ENCODE measurements at regions of chr14 and their contacts with region 1.

Region 1: GRCh38 chr14:63437953-63438757 is 105.0 kb downstream of the PPP2R5E start:
- DNase-seq: peak in 1 of 2 donors; percentile 86
- H3K4me3 ChIP-seq: peak overlapping the region; percentile 20 to 27
- H3K27ac ChIP-seq: peak overlapping the region; percentile 51 to 67
- H3K4me1 ChIP-seq: peaks cover 9 to 41% of the 10 kb centered on the region in 2 donors
- H3K27me3 ChIP-seq: no peaks in the 10 kb centered on the region
- CTCF ChIP-seq: peak in 1 of 3 experiments; percentile 29

Region 2: DNA sequence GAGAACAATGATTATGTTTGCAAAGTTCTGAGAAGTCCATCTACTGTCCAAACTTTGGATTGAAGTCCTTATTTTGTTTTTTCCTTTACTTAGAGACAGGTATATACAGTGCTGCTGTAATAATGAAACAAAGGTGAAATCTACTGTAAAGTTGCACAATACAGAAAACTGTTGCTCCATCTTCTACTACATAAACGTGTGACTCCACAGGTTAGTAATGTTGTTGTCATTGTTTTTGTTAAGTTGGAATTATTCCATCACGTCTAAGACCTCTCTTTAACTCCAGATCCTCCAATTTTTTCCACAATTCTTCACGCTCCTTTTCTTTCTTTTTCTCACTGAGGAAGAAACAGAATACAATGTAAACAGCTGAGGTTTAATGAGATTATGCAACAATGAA is 62.4 kb before region 1 on chr14:
- intact Hi-C with region 1: no loop called
- DNase-seq: no peak
- H3K4me3 ChIP-seq: no peak overlapping the region
- H3K27ac ChIP-seq: no peak overlapping the region
- H3K4me1 ChIP-seq: no peaks in the 10 kb centered on the region
- H3K27me3 ChIP-seq: no peaks in the 10 kb centered on the region
- CTCF ChIP-seq: no peak

Region 3: DNA sequence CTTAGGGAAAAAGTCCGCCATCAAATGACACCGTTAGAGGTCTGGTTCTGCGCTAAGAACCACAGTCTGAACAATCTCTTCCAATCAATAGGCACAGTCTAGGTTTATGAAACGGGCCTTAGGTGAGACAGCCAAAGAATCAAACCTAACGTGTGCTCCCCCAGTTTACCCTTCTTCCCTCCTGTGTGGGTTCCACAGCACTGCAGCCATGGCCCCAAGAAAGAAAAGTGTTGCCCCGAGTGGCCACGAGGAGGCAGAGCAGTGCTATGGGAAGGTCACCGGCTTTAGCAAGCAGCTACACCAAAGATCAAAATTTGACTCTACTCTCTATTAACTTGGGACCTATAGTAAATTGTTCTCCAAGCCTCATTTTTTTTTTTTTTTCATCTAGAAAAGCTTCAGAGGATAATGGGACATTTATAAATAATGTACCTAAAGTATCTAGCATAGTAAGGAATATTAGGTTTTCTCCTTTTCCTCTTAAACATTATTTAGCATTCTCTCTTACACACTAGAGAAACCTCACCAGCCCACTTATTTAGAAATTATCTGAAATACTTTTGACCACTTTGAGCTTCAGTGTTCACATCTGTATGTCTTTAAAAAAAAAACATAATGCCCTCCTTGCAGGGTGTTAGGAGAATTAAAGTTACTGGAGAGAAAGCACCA is 49.3 kb before region 1 on chr14:
- intact Hi-C with region 1: loop called (anchors 5 kb)
- DNase-seq: no peak
- H3K4me3 ChIP-seq: no peak overlapping the region
- H3K27ac ChIP-seq: no peak overlapping the region
- H3K4me1 ChIP-seq: no peaks in the 10 kb centered on the region
- H3K27me3 ChIP-seq: no peaks in the 10 kb centered on the region
- CTCF ChIP-seq: peak; percentile 53 to 82 (median 79)

Region 4: GRCh38 chr14:63493246-63493645 is 55.1 kb after region 1 on chr14:
- intact Hi-C with region 1: no loop called
- DNase-seq: no peak
- H3K4me3 ChIP-seq: no peak overlapping the region
- H3K27ac ChIP-seq: no peak overlapping the region
- H3K4me1 ChIP-seq: peaks cover 4 to 8% of the 10 kb centered on the region in 2 donors
- H3K27me3 ChIP-seq: no peaks in the 10 kb centered on the region
- CTCF ChIP-seq: no peak

Region 5: GRCh38 chr14:63510538-63510937 is 72.4 kb after region 1 on chr14:
- intact Hi-C with region 1: no loop called
- DNase-seq: no peak
- H3K4me3 ChIP-seq: no peak overlapping the region
- H3K27ac ChIP-seq: no peak overlapping the region
- H3K4me1 ChIP-seq: peaks cover 0 to 6% of the 10 kb centered on the region in 2 donors
- H3K27me3 ChIP-seq: no peaks in the 10 kb centered on the region
- CTCF ChIP-seq: no peak

Region 6: GRCh38 chr14:64726585-64726890 is 1288.4 kb after region 1 on chr14:
- intact Hi-C with region 1: loop called (anchors 10 kb)
- DNase-seq: no peak
- H3K4me3 ChIP-seq: no peak overlapping the region
- H3K27ac ChIP-seq: peak overlapping the region; percentile 14 to 89
- H3K4me1 ChIP-seq: peaks cover 16 to 60% of the 10 kb centered on the region in 2 donors
- H3K27me3 ChIP-seq: no peaks in the 10 kb centered on the region
- CTCF ChIP-seq: no peak

Measured in ascending aorta (tissue), 2 donors.